Astrocyte of the cerebellum (primary cell): ENCODE measurements at regions of chr9 and their contacts with region 1.

Region 1: GRCh38 chr9:90385146-90385545 is 257.5 kb downstream of the DIRAS2 start:
- DNase-seq: no peak
- H3K4me3 ChIP-seq: no peak overlapping the region
- CTCF ChIP-seq: no peak

Region 2: GRCh38 chr9:89576404-89576839 is 808.7 kb before region 1 on chr9:
- in situ Hi-C with region 1: loop called (anchors 10 kb)
- DNase-seq: no peak
- H3K4me3 ChIP-seq: no peak overlapping the region
- CTCF ChIP-seq: peak; percentile 42

Region 3: DNA sequence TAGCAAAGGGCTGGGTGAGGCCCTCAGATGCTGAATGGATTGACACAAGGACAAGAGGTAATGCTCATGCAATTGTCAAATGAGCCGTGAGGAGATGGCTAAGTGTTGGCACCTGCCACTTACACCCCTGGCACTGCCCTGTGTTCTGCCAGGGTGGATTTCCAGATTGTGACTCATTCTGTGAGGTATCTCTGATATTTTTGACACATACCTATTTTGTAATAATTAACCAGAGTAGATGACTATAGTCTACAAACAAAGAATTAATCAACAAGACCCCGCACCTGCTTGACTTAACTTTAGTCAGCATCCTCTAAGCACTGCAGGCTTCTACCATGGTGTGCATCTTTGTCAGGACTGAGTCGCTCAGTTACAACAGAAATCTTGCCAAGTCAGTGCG is 56.7 kb after region 1 on chr9:
- in situ Hi-C with region 1: no loop called
- DNase-seq: no peak
- H3K4me3 ChIP-seq: no peak overlapping the region
- CTCF ChIP-seq: no peak